ENCODE measurements at regions of chr2 and their contacts with region 1.

Region 1: GRCh38 chr2:96208143-96209010 is at the start of gene STARD7:
- DNase-seq: peak; percentile 99
- ATAC-seq: peak; percentile 94
- H3K4me3 Mint-ChIP-seq: peak within 1 kb of the TSS; percentile 100
- H3K27ac Mint-ChIP-seq: peak within 1 kb of the TSS; percentile 96
- H3K4me1 Mint-ChIP-seq: peaks cover 45% of the 10 kb centered on the region
- H3K27me3 Mint-ChIP-seq: no peaks in the 10 kb centered on the region
- total RNA-seq, gene STARD7: 151 to 173 TPM

Region 2: DNA sequence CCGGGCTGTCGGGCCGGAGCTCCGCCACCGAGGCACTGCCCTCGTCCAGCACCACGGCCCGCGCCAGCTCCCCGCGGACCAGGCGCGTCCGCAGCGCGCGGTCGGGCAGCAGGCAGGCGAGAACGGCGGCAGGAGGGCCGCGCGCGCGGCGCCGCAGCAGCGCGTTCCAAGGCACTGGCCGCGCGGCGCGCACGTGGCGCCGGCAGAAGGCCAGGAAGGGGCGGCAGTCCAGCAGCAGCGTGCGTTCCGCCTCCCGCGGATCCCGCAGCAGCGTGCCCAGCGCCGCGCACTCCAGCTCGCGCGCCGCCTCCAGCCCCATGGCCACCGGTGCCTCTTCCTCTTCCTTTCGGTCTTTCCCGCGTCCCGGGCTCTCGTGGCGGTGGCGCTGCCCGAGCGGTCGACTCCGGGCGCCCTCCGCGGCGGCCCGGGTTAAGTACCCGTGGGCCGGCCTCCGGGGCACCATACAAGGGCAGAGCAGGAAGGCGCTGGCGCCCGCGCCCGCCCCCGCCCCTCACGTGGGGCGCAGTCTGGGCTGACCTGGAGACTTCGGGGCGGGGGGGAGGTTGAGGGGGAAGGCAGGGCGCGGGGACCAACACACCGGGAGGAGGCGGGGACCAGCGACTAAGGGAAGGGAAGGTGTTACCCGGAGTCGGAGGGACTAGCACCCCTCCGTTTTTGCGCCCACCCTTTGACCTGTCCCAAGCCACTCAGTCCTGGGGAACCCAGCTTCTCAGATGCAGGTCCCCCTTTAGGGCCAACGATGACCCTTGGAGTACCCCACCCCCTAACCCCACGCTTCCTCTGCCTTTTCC is 63.1 kb before region 1 on chr2 and contains the start of gene DUSP2:
- CTCF ChIA-PET with region 1: interaction called, 3 read pairs
- POLR2A ChIA-PET with region 1: interaction called, 9 read pairs
- intact Hi-C with region 1: loop called (anchors 1 kb)
- DNase-seq: peak; percentile 97
- ATAC-seq: peak; percentile 45
- H3K4me3 Mint-ChIP-seq: peak within 1 kb of the TSS; percentile 97
- H3K27ac Mint-ChIP-seq: peak within 1 kb of the TSS; percentile 99
- H3K4me1 Mint-ChIP-seq: peaks cover 57% of the 10 kb centered on the region
- H3K27me3 Mint-ChIP-seq: no peaks in the 10 kb centered on the region
- total RNA-seq, gene DUSP2: 248 to 407 TPM

Region 3: DNA sequence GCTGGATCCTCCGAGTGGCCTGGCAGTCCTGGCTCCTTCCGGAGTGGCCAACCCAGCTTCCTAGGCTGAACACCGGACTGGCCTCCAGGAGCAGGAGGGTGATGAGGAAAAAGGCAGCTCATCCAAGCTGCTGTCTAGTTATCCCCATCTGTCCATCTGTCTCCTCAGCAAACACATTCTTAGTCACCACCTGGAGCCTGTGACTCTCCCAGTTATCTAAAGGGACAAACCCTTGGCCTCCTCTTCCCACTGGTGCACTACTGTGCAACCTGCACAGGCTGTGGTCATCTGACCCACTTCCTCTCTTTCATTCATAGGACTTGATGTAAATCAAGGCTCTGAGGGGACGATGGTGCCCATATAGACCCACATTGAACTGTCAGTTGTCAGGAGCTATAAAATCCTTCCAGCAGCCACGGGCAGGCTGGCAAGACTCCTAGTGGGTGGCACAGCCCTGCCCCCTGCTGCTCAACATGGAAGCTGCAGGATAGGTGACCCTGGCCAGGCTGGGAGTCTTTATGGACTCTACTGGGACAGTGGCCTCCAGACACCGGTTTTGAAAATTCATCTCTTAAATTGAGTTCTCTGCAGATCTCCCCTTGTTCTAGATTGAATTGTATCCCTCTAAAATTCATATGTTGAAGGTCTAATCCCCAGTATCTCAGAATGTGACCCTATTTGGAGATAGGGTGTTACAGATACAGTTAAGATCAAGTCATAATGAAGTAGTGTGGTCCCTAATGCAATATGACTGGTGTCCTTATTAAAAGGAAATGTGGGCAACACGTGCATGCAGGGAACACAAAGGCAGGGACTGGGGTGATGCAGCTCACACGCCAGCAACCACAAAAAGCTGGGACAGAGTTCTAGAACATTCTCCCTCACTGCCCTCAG is 33.9 kb before region 1 on chr2:
- CTCF ChIA-PET with region 1: interaction called, 17 read pairs
- POLR2A ChIA-PET with region 1: no interaction called
- intact Hi-C with region 1: no loop called
- DNase-seq: peak; percentile 92
- ATAC-seq: peak; percentile 96
- H3K4me3 Mint-ChIP-seq: peak overlapping the region; percentile 60
- H3K27ac Mint-ChIP-seq: peak overlapping the region; percentile 88
- H3K4me1 Mint-ChIP-seq: peaks cover 22% of the 10 kb centered on the region
- H3K27me3 Mint-ChIP-seq: no peaks in the 10 kb centered on the region

Region 4: GRCh38 chr2:96320728-96321622 is 112.6 kb after region 1 on chr2:
- CTCF ChIA-PET with region 1: no interaction called
- POLR2A ChIA-PET with region 1: no interaction called
- intact Hi-C with region 1: loop called in 1 of 2 experiments (anchors 1 kb)
- DNase-seq: peak; percentile 54
- ATAC-seq: peak; percentile 10
- H3K4me3 Mint-ChIP-seq: peak overlapping the region; percentile 73
- H3K27ac Mint-ChIP-seq: peak overlapping the region; percentile 63
- H3K4me1 Mint-ChIP-seq: peaks cover 52% of the 10 kb centered on the region
- H3K27me3 Mint-ChIP-seq: peaks cover 10% of the 10 kb centered on the region

Region 5: GRCh38 chr2:96374211-96374951 is 166.0 kb after region 1 on chr2:
- CTCF ChIA-PET with region 1: no interaction called
- POLR2A ChIA-PET with region 1: no interaction called
- intact Hi-C with region 1: no loop called
- DNase-seq: no peak
- ATAC-seq: no peak
- H3K4me3 Mint-ChIP-seq: no peak overlapping the region
- H3K27ac Mint-ChIP-seq: no peak overlapping the region
- H3K4me1 Mint-ChIP-seq: no peaks in the 10 kb centered on the region
- H3K27me3 Mint-ChIP-seq: no peaks in the 10 kb centered on the region

Region 6: GRCh38 chr2:96389736-96390135 is 181.4 kb after region 1 on chr2:
- CTCF ChIA-PET with region 1: no interaction called
- POLR2A ChIA-PET with region 1: no interaction called
- intact Hi-C with region 1: no loop called
- DNase-seq: no peak
- ATAC-seq: no peak
- H3K4me3 Mint-ChIP-seq: no peak overlapping the region
- H3K27ac Mint-ChIP-seq: no peak overlapping the region
- H3K4me1 Mint-ChIP-seq: peaks cover 7% of the 10 kb centered on the region
- H3K27me3 Mint-ChIP-seq: no peaks in the 10 kb centered on the region

Region 7: GRCh38 chr2:96536445-96537065 is 328.2 kb after region 1 on chr2 and contains the start of gene ARID5A:
- CTCF ChIA-PET with region 1: no interaction called
- POLR2A ChIA-PET with region 1: interaction called, 6 read pairs
- intact Hi-C with region 1: loop called in 1 of 2 experiments (anchors 2 kb)
- DNase-seq: peak; percentile 97
- ATAC-seq: peak; percentile 66
- H3K4me3 Mint-ChIP-seq: peak within 1 kb of the TSS; percentile 97
- H3K27ac Mint-ChIP-seq: peak within 1 kb of the TSS; percentile 90
- H3K4me1 Mint-ChIP-seq: peaks cover 64% of the 10 kb centered on the region
- H3K27me3 Mint-ChIP-seq: no peaks in the 10 kb centered on the region
- total RNA-seq, gene ARID5A: 179 to 191 TPM

Region 8: DNA sequence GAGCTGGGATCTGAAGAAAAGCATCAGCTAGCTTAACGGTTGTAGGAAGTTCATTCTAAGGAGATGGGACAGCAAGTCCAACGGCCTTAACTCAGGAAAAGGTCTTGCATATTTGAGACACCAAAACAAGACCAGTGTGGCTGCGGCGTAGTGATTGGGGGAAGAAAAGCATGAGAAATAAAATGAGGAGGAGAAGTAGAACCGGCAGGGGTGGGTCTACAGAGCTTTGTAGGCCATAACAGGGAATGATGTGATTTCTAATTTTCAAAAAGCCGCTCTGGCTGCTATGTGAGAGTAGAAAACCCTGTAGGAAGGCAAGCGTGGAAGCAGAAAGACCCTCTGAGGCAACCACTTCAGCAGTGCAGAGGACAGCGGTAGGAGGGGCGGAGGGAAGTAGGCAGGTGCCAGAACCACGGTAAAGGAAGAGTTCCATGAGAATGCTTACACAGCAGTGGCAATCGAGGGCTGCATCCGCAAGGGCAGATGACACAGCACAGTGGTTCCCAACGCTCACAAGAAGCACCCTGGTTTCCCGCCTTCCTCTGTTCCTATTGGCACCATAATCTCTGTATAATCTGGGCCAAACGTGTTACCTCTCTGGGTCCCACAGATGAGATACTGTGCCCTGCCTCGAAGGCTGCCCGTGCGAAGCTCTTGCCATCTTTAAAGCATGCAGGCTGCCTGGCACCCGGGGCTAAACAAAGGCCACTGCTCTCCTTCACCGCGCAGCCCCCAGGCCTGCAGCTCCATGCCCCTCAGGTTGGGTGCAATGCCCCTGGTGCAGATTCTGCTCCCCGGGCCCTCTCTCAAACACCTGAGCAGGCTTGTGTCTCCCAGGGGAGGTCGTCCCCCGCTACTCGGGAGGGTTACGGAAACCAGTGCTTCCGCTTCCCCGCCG is 648.6 kb after region 1 on chr2:
- CTCF ChIA-PET with region 1: no interaction called
- POLR2A ChIA-PET with region 1: no interaction called
- intact Hi-C with region 1: loop called in 1 of 2 experiments (anchors 1 kb)
- DNase-seq: peak; percentile 66
- ATAC-seq: no peak
- H3K4me3 Mint-ChIP-seq: peak overlapping the region; percentile 90
- H3K27ac Mint-ChIP-seq: peak overlapping the region; percentile 79
- H3K4me1 Mint-ChIP-seq: peaks cover 36% of the 10 kb centered on the region
- H3K27me3 Mint-ChIP-seq: no peaks in the 10 kb centered on the region

Measured in activated CD4-positive, alpha-beta T cell treated with anti-CD3 and anti-CD28 coated beads for 36 hours (primary cell).